ENCODE measurements at regions of chr16 and their contacts with region 1.

Region 1: GRCh38 chr16:29973384-29974246 is at the start of gene TAOK2:
- DNase-seq: peak; percentile 99
- H3K4me3 ChIP-seq: peak within 1 kb of the TSS; percentile 50
- H3K4me3 Mint-ChIP-seq: peak within 1 kb of the TSS; percentile 88
- H3K27ac Mint-ChIP-seq: peak within 1 kb of the TSS; percentile 77
- H3K4me1 ChIP-seq: 0 out of 2 replicates have a peak, but pooled peaks cover 9% of the 10 kb centered on the region
- H3K4me1 Mint-ChIP-seq: peaks cover 16% of the 10 kb centered on the region
- H3K27me3 ChIP-seq: no peaks in the 10 kb centered on the region
- H3K27me3 Mint-ChIP-seq: no peaks in the 10 kb centered on the region
- CTCF ChIP-seq: no peak
- total RNA-seq, gene TAOK2: 45.8 and 47.1 TPM in 2 replicates

Region 2: GRCh38 chr16:29678691-29679267 is 294.8 kb before region 1 on chr16 and contains the start of gene QPRT:
- CTCF ChIA-PET with region 1: no interaction called
- POLR2A ChIA-PET with region 1: interaction called, 12 read pairs
- intact Hi-C with region 1: no loop called
- DNase-seq: peak; percentile 90 to 92
- H3K4me3 ChIP-seq: peak within 1 kb of the TSS; percentile 55
- H3K4me3 Mint-ChIP-seq: peak within 1 kb of the TSS; percentile 96
- H3K27ac Mint-ChIP-seq: peak within 1 kb of the TSS; percentile 96
- H3K4me1 ChIP-seq: peaks cover 9% of the 10 kb centered on the region
- H3K4me1 Mint-ChIP-seq: peaks cover 9% of the 10 kb centered on the region
- H3K27me3 ChIP-seq: no peaks in the 10 kb centered on the region
- H3K27me3 Mint-ChIP-seq: no peaks in the 10 kb centered on the region
- CTCF ChIP-seq: no peak
- total RNA-seq, gene QPRT: 176 and 178 TPM in 2 replicates

Region 3: DNA sequence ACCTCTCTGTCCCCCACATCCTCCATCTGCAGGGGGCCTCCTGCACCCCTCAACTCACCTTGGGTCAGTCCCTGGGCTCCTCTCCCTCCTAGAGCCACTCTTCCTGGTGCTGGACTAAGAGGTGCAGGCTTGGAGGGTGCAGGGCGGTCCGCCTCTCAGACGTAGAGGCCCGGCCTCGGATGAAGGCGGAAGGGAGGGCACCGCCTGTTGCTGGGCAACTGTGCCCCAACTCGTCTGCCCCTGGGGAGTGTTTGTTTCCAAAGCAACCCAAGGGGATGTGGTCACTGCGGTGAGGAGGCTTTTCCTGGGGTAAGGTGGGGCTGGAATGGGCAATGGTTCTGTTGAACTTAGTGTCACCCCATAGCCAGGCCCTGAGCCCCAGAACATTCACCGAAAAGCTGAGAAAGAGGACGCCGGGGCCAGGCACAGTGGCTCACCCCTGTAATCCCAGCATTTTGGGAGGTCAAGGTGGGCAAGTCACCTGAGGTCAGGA is 227.7 kb before region 1 on chr16 and contains the start of gene C16orf54:
- CTCF ChIA-PET with region 1: no interaction called
- POLR2A ChIA-PET with region 1: no interaction called
- intact Hi-C with region 1: no loop called
- DNase-seq: no peak
- H3K4me3 ChIP-seq: no peak within 1 kb of the TSS
- H3K4me3 Mint-ChIP-seq: no peak within 1 kb of the TSS
- H3K27ac Mint-ChIP-seq: peak within 1 kb of the TSS; percentile 40
- H3K4me1 ChIP-seq: peaks cover 14% of the 10 kb centered on the region
- H3K4me1 Mint-ChIP-seq: peaks cover under 1% of the 10 kb centered on the region
- H3K27me3 ChIP-seq: no peaks in the 10 kb centered on the region
- H3K27me3 Mint-ChIP-seq: no peaks in the 10 kb centered on the region
- CTCF ChIP-seq: no peak
- total RNA-seq, gene C16orf54: not detected in 2 replicates

Region 4: GRCh38 chr16:29805378-29806098 is 168.1 kb before region 1 on chr16:
- CTCF ChIA-PET with region 1: interaction called, 10 read pairs
- POLR2A ChIA-PET with region 1: no interaction called
- intact Hi-C with region 1: no loop called
- DNase-seq: peak; percentile 96 to 97
- H3K4me3 ChIP-seq: peak overlapping the region; percentile 59
- H3K4me3 Mint-ChIP-seq: peak overlapping the region; percentile 79
- H3K27ac Mint-ChIP-seq: peak overlapping the region; percentile 92
- H3K4me1 ChIP-seq: peaks cover 20% of the 10 kb centered on the region; the same call in 1 of the 2 replicates
- H3K4me1 Mint-ChIP-seq: peaks cover 26% of the 10 kb centered on the region
- H3K27me3 ChIP-seq: no peaks in the 10 kb centered on the region
- H3K27me3 Mint-ChIP-seq: no peaks in the 10 kb centered on the region
- CTCF ChIP-seq: no peak

Region 5: GRCh38 chr16:29862884-29863668 is 110.5 kb before region 1 on chr16 and contains the start of gene CDIPT:
- CTCF ChIA-PET with region 1: no interaction called
- POLR2A ChIA-PET with region 1: interaction called, 3 read pairs
- intact Hi-C with region 1: loop called (anchors 10 kb)
- DNase-seq: peak; percentile 92 to 96
- H3K4me3 ChIP-seq: peak within 1 kb of the TSS; percentile 80
- H3K4me3 Mint-ChIP-seq: peak within 1 kb of the TSS; percentile 93
- H3K27ac Mint-ChIP-seq: peak within 1 kb of the TSS; percentile 100
- H3K4me1 ChIP-seq: peaks cover 6% of the 10 kb centered on the region; the same call in 1 of the 2 replicates
- H3K4me1 Mint-ChIP-seq: peaks cover 6% of the 10 kb centered on the region
- H3K27me3 ChIP-seq: no peaks in the 10 kb centered on the region
- H3K27me3 Mint-ChIP-seq: no peaks in the 10 kb centered on the region
- CTCF ChIP-seq: peak; percentile 13 to 66
- total RNA-seq, gene CDIPT: 56.6 and 57.1 TPM in 2 replicates

Region 6: GRCh38 chr16:29900102-29900887 is 73.3 kb before region 1 on chr16 and contains the start of gene ASPHD1:
- CTCF ChIA-PET with region 1: interaction called, 5 read pairs
- POLR2A ChIA-PET with region 1: interaction called, 18 read pairs
- intact Hi-C with region 1: no loop called
- DNase-seq: peak; percentile 73 to 83
- H3K4me3 ChIP-seq: peak within 1 kb of the TSS; percentile 66
- H3K4me3 Mint-ChIP-seq: peak within 1 kb of the TSS; percentile 93
- H3K27ac Mint-ChIP-seq: peak within 1 kb of the TSS; percentile 88
- H3K4me1 ChIP-seq: peaks cover 22% of the 10 kb centered on the region; the same call in 1 of the 2 replicates
- H3K4me1 Mint-ChIP-seq: peaks cover 22% of the 10 kb centered on the region
- H3K27me3 ChIP-seq: no peaks in the 10 kb centered on the region
- H3K27me3 Mint-ChIP-seq: no peaks in the 10 kb centered on the region
- CTCF ChIP-seq: no peak
- total RNA-seq, gene ASPHD1: 13.2 and 14.7 TPM in 2 replicates

Region 7: GRCh38 chr16:29926005-29926710 is 47.5 kb before region 1 on chr16 and contains the start of gene KCTD13:
- CTCF ChIA-PET with region 1: interaction called, 13 read pairs
- POLR2A ChIA-PET with region 1: interaction called, 17 read pairs
- intact Hi-C with region 1: loop called (anchors 1 kb)
- DNase-seq: peak; percentile 82 to 93
- H3K4me3 ChIP-seq: peak within 1 kb of the TSS; percentile 97
- H3K4me3 Mint-ChIP-seq: peak within 1 kb of the TSS; percentile 94
- H3K27ac Mint-ChIP-seq: peak within 1 kb of the TSS; percentile 89
- H3K4me1 ChIP-seq: peaks cover 15% of the 10 kb centered on the region
- H3K4me1 Mint-ChIP-seq: peaks cover 23% of the 10 kb centered on the region
- H3K27me3 ChIP-seq: no peaks in the 10 kb centered on the region
- H3K27me3 Mint-ChIP-seq: no peaks in the 10 kb centered on the region
- CTCF ChIP-seq: no peak
- total RNA-seq, gene KCTD13: 13.0 and 14.9 TPM in 2 replicates

Region 8: GRCh38 chr16:29995911-29996772 is 22.5 kb after region 1 on chr16 and contains the start of gene INO80E:
- CTCF ChIA-PET with region 1: interaction called, 4 read pairs
- POLR2A ChIA-PET with region 1: interaction called, 15 read pairs
- intact Hi-C with region 1: no loop called
- DNase-seq: peak; percentile 97 to 98
- H3K4me3 ChIP-seq: peak within 1 kb of the TSS; percentile 68
- H3K4me3 Mint-ChIP-seq: peak within 1 kb of the TSS; percentile 99
- H3K27ac Mint-ChIP-seq: peak within 1 kb of the TSS; percentile 65
- H3K4me1 ChIP-seq: peaks cover 11% of the 10 kb centered on the region; the same call in 1 of the 2 replicates
- H3K4me1 Mint-ChIP-seq: peaks cover 12% of the 10 kb centered on the region
- H3K27me3 ChIP-seq: no peaks in the 10 kb centered on the region
- H3K27me3 Mint-ChIP-seq: no peaks in the 10 kb centered on the region
- CTCF ChIP-seq: no peak
- total RNA-seq, gene INO80E: 58.6 and 58.8 TPM in 2 replicates